Body of pancreas (tissue), 4 donors: ENCODE measurements at regions of chr16 and their contacts with region 1.

Region 1: GRCh38 chr16:72467157-72467759 is 295.3 kb upstream of the PMFBP1 start:
- DNase-seq: peak in 1 of 4 donors; percentile 18
- ATAC-seq: no peak
- H3K4me3 ChIP-seq: no peak overlapping the region
- H3K27ac ChIP-seq: no peak overlapping the region
- H3K4me1 ChIP-seq: no peaks in the 10 kb centered on the region
- H3K27me3 ChIP-seq: no peaks in the 10 kb centered on the region
- CTCF ChIP-seq: peak in 6 of 7 experiments; percentile 52 to 73 (median 65)
- POLR2A ChIP-seq: no peak

Region 2: GRCh38 chr16:72241930-72242329 is 225.3 kb before region 1 on chr16:
- intact Hi-C with region 1: loop called (anchors 10 kb)
- DNase-seq: peak; percentile 35 to 54 (median 44)
- ATAC-seq: peak; percentile 97
- H3K4me3 ChIP-seq: no peak overlapping the region
- H3K27ac ChIP-seq: no peak overlapping the region
- H3K4me1 ChIP-seq: peaks cover 5% of the 10 kb centered on the region
- H3K27me3 ChIP-seq: no peaks in the 10 kb centered on the region
- CTCF ChIP-seq: peak; percentile 51 to 86 (median 77)
- POLR2A ChIP-seq: no peak

Region 3: DNA sequence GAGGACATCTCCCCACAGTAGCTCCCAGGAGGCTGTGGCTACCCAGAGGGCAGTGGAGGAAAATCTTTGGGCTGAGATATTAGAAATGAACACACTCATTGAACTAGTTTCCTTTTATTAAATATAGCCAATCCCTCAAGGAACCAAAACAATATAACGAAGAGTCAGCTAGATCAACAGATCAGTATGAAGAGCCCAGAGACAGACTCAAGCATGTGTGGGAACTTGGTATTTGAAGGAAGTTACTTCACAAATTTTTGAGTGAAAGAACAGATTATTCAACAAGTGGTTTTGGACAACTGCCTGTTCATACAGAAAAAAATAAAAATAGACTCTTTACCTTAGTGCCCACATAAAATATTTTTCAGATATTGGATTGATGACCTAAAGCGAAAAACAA is 111.7 kb before region 1 on chr16:
- intact Hi-C with region 1: no loop called
- DNase-seq: no peak
- ATAC-seq: no peak
- H3K4me3 ChIP-seq: no peak overlapping the region
- H3K27ac ChIP-seq: no peak overlapping the region
- H3K4me1 ChIP-seq: no peaks in the 10 kb centered on the region
- H3K27me3 ChIP-seq: no peaks in the 10 kb centered on the region
- CTCF ChIP-seq: no peak
- POLR2A ChIP-seq: no peak

Region 4: GRCh38 chr16:72568502-72568901 is 101.2 kb after region 1 on chr16:
- intact Hi-C with region 1: no loop called
- DNase-seq: no peak
- ATAC-seq: no peak
- H3K4me3 ChIP-seq: no peak overlapping the region
- H3K27ac ChIP-seq: no peak overlapping the region
- H3K4me1 ChIP-seq: no peaks in the 10 kb centered on the region
- H3K27me3 ChIP-seq: no peaks in the 10 kb centered on the region
- CTCF ChIP-seq: no peak
- POLR2A ChIP-seq: no peak